Dendritic cell treated with granulocyte-macrophage colony-stimulating factor and Interleukin-4, amounts not matched to agents 40 ng/mL and 50 ng/mL, for 4 days (primary cell): ENCODE measurements at regions of chr3 and their contacts with region 1.

Region 1: DNA sequence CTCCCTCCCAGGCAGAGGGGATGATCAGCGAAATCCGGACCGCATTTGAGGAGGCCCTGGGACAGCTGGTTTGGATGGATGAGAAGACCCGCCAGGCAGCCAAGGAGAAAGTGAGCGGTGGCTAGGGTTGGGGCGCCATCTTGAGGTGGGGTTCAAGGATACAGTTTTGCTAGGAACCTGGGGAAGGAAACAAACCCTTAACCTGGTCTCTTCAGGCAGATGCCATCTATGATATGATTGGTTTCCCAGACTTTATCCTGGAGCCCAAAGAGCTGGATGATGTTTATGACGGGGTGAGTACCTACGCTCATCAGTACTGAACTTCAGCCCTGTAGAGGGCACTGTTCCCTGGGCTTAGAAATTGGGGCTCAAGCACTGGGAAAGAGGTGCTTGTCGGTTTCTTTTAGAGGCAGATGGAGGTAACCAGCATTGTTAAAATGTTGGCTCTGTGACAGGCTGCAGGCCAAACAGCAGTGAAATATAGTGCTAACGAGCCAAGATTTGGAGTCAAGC is 9.6 kb upstream of the PSMD2 start:
- H3K4me3 Mint-ChIP-seq: no peak overlapping the region
- H3K27ac Mint-ChIP-seq: no peak overlapping the region
- H3K4me1 Mint-ChIP-seq: peaks cover 7% of the 10 kb centered on the region
- H3K27me3 Mint-ChIP-seq: peaks cover 28% of the 10 kb centered on the region

Region 2: GRCh38 chr3:183895296-183895695 is 394.2 kb before region 1 on chr3:
- intact Hi-C with region 1: loop called (anchors 1 kb)
- H3K4me3 Mint-ChIP-seq: no peak overlapping the region
- H3K27ac Mint-ChIP-seq: no peak overlapping the region
- H3K4me1 Mint-ChIP-seq: peaks cover 6% of the 10 kb centered on the region
- H3K27me3 Mint-ChIP-seq: peaks cover 18% of the 10 kb centered on the region

Region 3: GRCh38 chr3:184185461-184186308 is 103.8 kb before region 1 on chr3 and contains the start of gene ABCF3:
- intact Hi-C with region 1: no loop called
- H3K4me3 Mint-ChIP-seq: peak within 1 kb of the TSS; percentile 96
- H3K27ac Mint-ChIP-seq: peak within 1 kb of the TSS; percentile 94
- H3K4me1 Mint-ChIP-seq: peaks cover 76% of the 10 kb centered on the region
- H3K27me3 Mint-ChIP-seq: no peaks in the 10 kb centered on the region

Region 4: GRCh38 chr3:184227481-184227935 is 62.0 kb before region 1 on chr3:
- intact Hi-C with region 1: loop called (anchors 2 kb)
- H3K4me3 Mint-ChIP-seq: no peak overlapping the region
- H3K27ac Mint-ChIP-seq: no peak overlapping the region
- H3K4me1 Mint-ChIP-seq: peaks cover 8% of the 10 kb centered on the region
- H3K27me3 Mint-ChIP-seq: peaks cover 75% of the 10 kb centered on the region